ENCODE measurements at regions of chr5 and their contacts with region 1.

Region 1: GRCh38 chr5:112146323-112147226 is 272.5 kb downstream of the EPB41L4A start:
- DNase-seq: peak; percentile 83

Region 2: GRCh38 chr5:111530298-111530740 is 616.3 kb before region 1 on chr5:
- in situ Hi-C with region 1: loop called (anchors 25 kb)
- DNase-seq: peak; percentile 93

Region 3: GRCh38 chr5:111680737-111681413 is 465.7 kb before region 1 on chr5:
- in situ Hi-C with region 1: loop called (anchors 25 kb)
- DNase-seq: no peak

Region 4: DNA sequence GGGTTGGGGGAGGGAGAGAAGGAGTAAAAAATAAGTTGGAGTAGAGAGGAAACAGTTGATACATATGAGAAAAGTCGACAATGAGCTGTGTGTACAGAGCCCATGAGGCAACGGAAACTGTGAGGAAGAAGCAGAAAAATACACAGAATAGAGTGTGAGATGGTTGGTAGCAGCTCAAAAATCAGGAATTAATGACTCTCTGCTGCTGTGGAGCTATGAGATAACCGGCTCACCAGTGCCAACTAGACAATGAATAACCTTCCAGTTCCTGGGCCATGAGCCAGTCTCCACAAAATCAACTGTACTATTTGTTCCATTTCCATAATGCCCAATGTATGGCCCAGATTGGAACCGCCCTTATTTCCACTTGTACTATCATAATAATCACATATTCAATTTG is 336.5 kb before region 1 on chr5:
- in situ Hi-C with region 1: no loop called
- DNase-seq: no peak

Region 5: DNA sequence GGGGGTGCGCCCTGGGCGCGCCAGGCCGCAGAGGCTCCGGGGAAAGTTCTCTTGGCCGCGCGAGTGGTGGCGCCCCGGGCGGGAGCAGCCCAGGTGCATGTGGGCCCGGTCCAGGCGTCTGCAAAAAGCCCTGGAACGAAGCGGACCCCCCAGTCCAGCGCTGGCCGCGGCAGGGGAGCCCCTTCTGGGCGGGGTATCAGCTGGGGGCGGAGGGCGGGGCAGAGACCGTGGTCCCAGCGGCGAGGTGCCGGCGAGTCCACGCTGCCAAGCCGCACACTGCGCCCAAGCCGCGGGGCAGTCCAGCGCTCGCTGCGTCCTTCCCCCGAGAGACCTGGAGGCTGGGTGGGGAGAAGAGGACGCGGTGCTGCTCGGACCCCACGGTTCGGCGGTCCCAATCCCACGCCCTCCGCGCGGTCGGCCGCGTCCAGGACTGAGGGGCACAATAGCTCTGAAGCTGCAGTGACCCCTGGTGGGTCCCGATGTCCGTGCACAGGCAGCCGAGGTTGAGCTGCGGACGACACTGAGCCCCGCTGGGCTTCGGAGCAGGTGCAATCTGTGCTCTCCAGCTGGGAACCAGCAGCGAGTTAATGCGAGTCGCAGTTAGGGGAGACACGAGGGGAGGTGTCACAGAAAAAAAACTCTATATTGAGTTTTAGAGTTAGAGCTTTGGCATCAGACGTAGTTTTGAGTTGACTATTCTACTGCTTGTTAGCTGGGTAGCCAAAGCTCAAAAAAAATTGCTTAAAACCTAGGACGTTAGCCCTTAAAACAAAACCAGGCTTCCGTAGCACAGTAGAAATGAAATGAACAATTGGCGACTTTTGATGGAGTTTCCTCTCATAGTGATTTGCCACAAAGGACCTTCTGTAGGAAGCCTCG is 273.6 kb after region 1 on chr5:
- in situ Hi-C with region 1: no loop called
- DNase-seq: peak; percentile 74

Measured in KBM-7 (cell line).